Naive thymus-derived CD4-positive, alpha-beta T cell (primary cell): ENCODE measurements at regions of chr4 and their contacts with region 1.

Region 1: GRCh38 chr4:38654273-38654672 is 9.7 kb upstream of the KLF3 start:
- DNase-seq: peak in 7 of 9 donors; percentile 67 to 88 (median 79)
- ATAC-seq: peak; percentile 86
- H3K4me3 ChIP-seq: peak overlapping the region; percentile 45
- H3K4me3 Mint-ChIP-seq: peak overlapping the region; percentile 64 to 94 (median 82)
- H3K27ac ChIP-seq: peak overlapping the region; percentile 92
- H3K27ac Mint-ChIP-seq: peak overlapping the region; percentile 80 to 100 (median 99)
- H3K4me1 ChIP-seq: peaks cover 24 to 43% of the 10 kb centered on the region in 2 donors
- H3K4me1 Mint-ChIP-seq: peaks cover 37 to 70% (median 65%) of the 10 kb centered on the region in 7 donors
- H3K27me3 ChIP-seq: no peaks in the 10 kb centered on the region
- H3K27me3 Mint-ChIP-seq: peaks cover 0 to 46% (median 0%) of the 10 kb centered on the region in 5 donors

Region 2: GRCh38 chr4:38319456-38320342 is 334.6 kb before region 1 on chr4:
- CTCF ChIA-PET with region 1: interaction called, 4 read pairs
- POLR2A ChIA-PET with region 1: interaction called, 17 read pairs
- intact Hi-C with region 1: no loop called
- DNase-seq: peak; percentile 73 to 96 (median 83)
- ATAC-seq: peak; percentile 91
- H3K4me3 ChIP-seq: peak overlapping the region; percentile 38
- H3K4me3 Mint-ChIP-seq: peak overlapping the region; percentile 80 to 95 (median 88)
- H3K27ac ChIP-seq: peak overlapping the region; percentile 68
- H3K27ac Mint-ChIP-seq: peak overlapping the region; percentile 87 to 98 (median 94)
- H3K4me1 ChIP-seq: peaks cover 19 to 35% of the 10 kb centered on the region in 2 donors
- H3K4me1 Mint-ChIP-seq: peaks cover 33 to 75% (median 70%) of the 10 kb centered on the region in 7 donors
- H3K27me3 ChIP-seq: no peaks in the 10 kb centered on the region
- H3K27me3 Mint-ChIP-seq: peaks cover 0 to 10% (median 0%) of the 10 kb centered on the region in 5 donors

Region 3: GRCh38 chr4:38396845-38397547 is 257.3 kb before region 1 on chr4:
- CTCF ChIA-PET with region 1: no interaction called
- POLR2A ChIA-PET with region 1: no interaction called
- intact Hi-C with region 1: no loop called
- DNase-seq: no peak
- ATAC-seq: no peak
- H3K4me3 ChIP-seq: no peak overlapping the region
- H3K4me3 Mint-ChIP-seq: no peak overlapping the region
- H3K27ac ChIP-seq: no peak overlapping the region
- H3K27ac Mint-ChIP-seq: peak overlapping the region in 2 of 9 donors; percentile 32 to 89
- H3K4me1 ChIP-seq: no peaks in the 10 kb centered on the region
- H3K4me1 Mint-ChIP-seq: peaks cover 0 to 6% (median 0%) of the 10 kb centered on the region in 7 donors
- H3K27me3 ChIP-seq: no peaks in the 10 kb centered on the region
- H3K27me3 Mint-ChIP-seq: peaks cover 0 to 2% (median 0%) of the 10 kb centered on the region in 5 donors

Region 4: DNA sequence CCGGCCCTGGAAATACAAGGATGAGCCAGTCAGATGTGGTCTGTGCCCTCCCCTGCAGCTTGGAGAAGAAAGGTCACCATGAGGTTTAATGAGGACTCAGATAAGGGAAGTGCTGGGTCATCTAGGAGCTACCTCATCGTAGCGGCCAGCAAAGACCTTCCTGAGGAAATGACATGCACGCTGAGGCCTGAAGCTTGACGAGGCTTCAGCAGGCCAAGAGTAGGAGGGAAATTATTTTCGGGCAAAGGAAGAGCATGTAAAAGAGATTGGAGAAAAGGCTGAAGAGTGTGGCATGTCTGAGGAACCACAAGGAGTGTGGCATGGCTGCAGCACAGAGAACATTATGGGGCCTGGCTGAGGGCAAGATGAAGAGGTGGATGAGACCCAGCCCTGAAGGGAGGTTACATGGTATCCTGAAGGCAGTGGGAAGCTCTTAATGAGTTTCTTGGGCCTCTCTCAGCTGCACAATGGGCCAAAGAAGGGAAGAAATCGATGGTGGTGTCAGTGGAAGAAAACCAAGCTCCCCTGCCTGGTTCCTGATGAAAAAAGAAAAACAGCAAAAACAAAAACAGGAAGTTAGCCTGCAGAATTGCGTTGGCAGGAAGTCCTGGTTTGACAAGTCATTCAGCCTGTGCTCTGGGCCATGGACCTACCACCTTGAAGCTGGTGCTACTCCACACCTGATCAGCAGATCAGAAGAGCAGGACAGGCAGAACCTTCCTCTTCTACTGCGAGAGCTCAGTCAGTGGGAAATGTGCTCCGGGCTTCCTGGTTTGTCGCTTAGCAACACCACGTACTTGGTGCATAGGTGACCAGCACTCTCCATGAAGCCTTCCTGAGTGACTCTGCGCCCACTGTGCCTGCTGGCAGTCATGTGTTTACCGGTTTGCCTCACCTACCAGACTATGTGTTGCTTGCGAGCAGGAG is 124.8 kb before region 1 on chr4:
- CTCF ChIA-PET with region 1: no interaction called
- POLR2A ChIA-PET with region 1: interaction called, 10 read pairs
- intact Hi-C with region 1: no loop called
- DNase-seq: peak in 8 of 9 donors; percentile 25 to 57 (median 34)
- ATAC-seq: peak; percentile 88
- H3K4me3 ChIP-seq: no peak overlapping the region
- H3K4me3 Mint-ChIP-seq: peak overlapping the region; percentile 22 to 80 (median 58)
- H3K27ac ChIP-seq: peak overlapping the region; percentile 30
- H3K27ac Mint-ChIP-seq: peak overlapping the region; percentile 80 to 96 (median 90)
- H3K4me1 ChIP-seq: peaks cover 18 to 22% of the 10 kb centered on the region in 2 donors
- H3K4me1 Mint-ChIP-seq: peaks cover 21 to 43% (median 35%) of the 10 kb centered on the region in 7 donors
- H3K27me3 ChIP-seq: no peaks in the 10 kb centered on the region
- H3K27me3 Mint-ChIP-seq: peaks cover 0 to 34% (median 0%) of the 10 kb centered on the region in 5 donors

Region 5: DNA sequence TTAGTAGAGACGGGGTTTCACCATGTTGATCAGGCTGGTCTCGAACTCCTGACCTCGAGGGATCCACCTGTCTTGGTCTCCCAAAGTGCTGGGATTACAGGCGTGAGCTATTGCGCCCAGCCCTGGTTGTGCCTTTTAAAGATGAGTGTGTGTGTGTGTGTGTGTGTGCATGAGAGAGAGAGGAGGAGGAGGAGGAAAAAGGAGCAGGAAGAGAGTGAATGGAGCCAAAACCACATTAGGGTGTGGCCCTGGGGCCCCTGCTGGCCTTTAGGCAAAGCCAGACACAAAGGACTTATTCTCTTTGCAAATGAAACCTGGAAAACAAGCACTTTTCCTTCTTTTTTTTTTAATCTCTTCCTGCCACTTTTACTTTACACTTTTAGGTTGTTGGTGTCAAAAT is 38.4 kb before region 1 on chr4:
- CTCF ChIA-PET with region 1: no interaction called
- POLR2A ChIA-PET with region 1: interaction called, 4 read pairs
- intact Hi-C with region 1: loop called in 1 of 2 experiments (anchors 5 kb)
- DNase-seq: no peak
- ATAC-seq: no peak
- H3K4me3 ChIP-seq: no peak overlapping the region
- H3K4me3 Mint-ChIP-seq: peak overlapping the region in 1 of 10 donors; percentile 37
- H3K27ac ChIP-seq: no peak overlapping the region
- H3K27ac Mint-ChIP-seq: peak overlapping the region in 1 of 9 donors; percentile 44
- H3K4me1 ChIP-seq: peaks cover 0 to 11% of the 10 kb centered on the region in 2 donors
- H3K4me1 Mint-ChIP-seq: peaks cover 0 to 37% (median 21%) of the 10 kb centered on the region in 7 donors
- H3K27me3 ChIP-seq: no peaks in the 10 kb centered on the region
- H3K27me3 Mint-ChIP-seq: peaks cover 0 to 4% (median 0%) of the 10 kb centered on the region in 5 donors

Region 6: GRCh38 chr4:38634047-38634759 is 20.1 kb before region 1 on chr4:
- CTCF ChIA-PET with region 1: no interaction called
- POLR2A ChIA-PET with region 1: interaction called, 17 read pairs
- intact Hi-C with region 1: loop called in 1 of 2 experiments (anchors 2 kb)
- DNase-seq: no peak
- ATAC-seq: no peak
- H3K4me3 ChIP-seq: no peak overlapping the region
- H3K4me3 Mint-ChIP-seq: no peak overlapping the region
- H3K27ac ChIP-seq: no peak overlapping the region
- H3K27ac Mint-ChIP-seq: peak overlapping the region in 2 of 9 donors; percentile 41 to 88
- H3K4me1 ChIP-seq: no peaks in the 10 kb centered on the region
- H3K4me1 Mint-ChIP-seq: peaks cover 0 to 14% (median 7%) of the 10 kb centered on the region in 7 donors
- H3K27me3 ChIP-seq: no peaks in the 10 kb centered on the region
- H3K27me3 Mint-ChIP-seq: peaks cover 0 to 28% (median 0%) of the 10 kb centered on the region in 5 donors

Region 7: GRCh38 chr4:38639242-38639641 is 15.0 kb before region 1 on chr4:
- CTCF ChIA-PET with region 1: interaction called, 4 read pairs
- POLR2A ChIA-PET with region 1: interaction called, 26 read pairs
- intact Hi-C with region 1: no loop called
- DNase-seq: no peak
- ATAC-seq: no peak
- H3K4me3 ChIP-seq: no peak overlapping the region
- H3K4me3 Mint-ChIP-seq: no peak overlapping the region
- H3K27ac ChIP-seq: no peak overlapping the region
- H3K27ac Mint-ChIP-seq: no peak overlapping the region
- H3K4me1 ChIP-seq: no peaks in the 10 kb centered on the region
- H3K4me1 Mint-ChIP-seq: peaks cover 0 to 10% (median 7%) of the 10 kb centered on the region in 7 donors
- H3K27me3 ChIP-seq: no peaks in the 10 kb centered on the region
- H3K27me3 Mint-ChIP-seq: peaks cover 0 to 62% (median 0%) of the 10 kb centered on the region in 5 donors